ENCODE measurements at regions of chr2 and their contacts with region 1.

Region 1: GRCh38 chr2:27703638-27704341 is 40.1 kb downstream of the SLC4A1AP start:
- DNase-seq: peak; percentile 82
- H3K4me3 ChIP-seq: no peak overlapping the region
- CTCF ChIP-seq: peak; percentile 79

Region 2: GRCh38 chr2:27689424-27689823 is 14.4 kb before region 1 on chr2:
- CTCF ChIA-PET with region 1: interaction called, 48 read pairs
- POLR2A ChIA-PET with region 1: interaction called, 3 read pairs
- DNase-seq: no peak
- H3K4me3 ChIP-seq: no peak overlapping the region
- CTCF ChIP-seq: no peak

Region 3: GRCh38 chr2:27715318-27716210 is 11.8 kb after region 1 on chr2:
- CTCF ChIA-PET with region 1: interaction called, 17 read pairs
- POLR2A ChIA-PET with region 1: interaction called, 4 read pairs
- DNase-seq: peak; percentile 38
- H3K4me3 ChIP-seq: peak overlapping the region; percentile 45
- CTCF ChIP-seq: no peak

Region 4: GRCh38 chr2:28452534-28453081 is 748.8 kb after region 1 on chr2:
- CTCF ChIA-PET with region 1: interaction called, 28 read pairs
- POLR2A ChIA-PET with region 1: no interaction called
- DNase-seq: no peak
- H3K4me3 ChIP-seq: no peak overlapping the region
- CTCF ChIP-seq: peak; percentile 97

Measured in AG04449 (cell line).